ENCODE measurements at regions of chr3 and their contacts with region 1.

Region 1: GRCh38 chr3:57199895-57200297 is at the start of gene HESX1:
- DNase-seq: no peak
- H3K4me3 ChIP-seq: no peak within 1 kb of the TSS
- H3K27ac ChIP-seq: no peak within 1 kb of the TSS
- H3K4me1 ChIP-seq: peaks cover 9% of the 10 kb centered on the region
- H3K27me3 ChIP-seq: no peaks in the 10 kb centered on the region
- CTCF ChIP-seq: no peak
- POLR2A ChIP-seq: no peak
- total RNA-seq, gene HESX1: 0.58 and 0.65 TPM in 2 replicates

Region 2: GRCh38 chr3:56878074-56878473 is 321.8 kb before region 1 on chr3:
- CTCF ChIA-PET with region 1: no interaction called
- POLR2A ChIA-PET with region 1: no interaction called
- dilution Hi-C with region 1: no loop called
- intact Hi-C with region 1: no loop called
- DNase-seq: peak; percentile 53
- H3K4me3 ChIP-seq: no peak overlapping the region
- H3K27ac ChIP-seq: peak overlapping the region; percentile 13
- H3K4me1 ChIP-seq: peaks cover 30% of the 10 kb centered on the region
- H3K27me3 ChIP-seq: no peaks in the 10 kb centered on the region
- CTCF ChIP-seq: no peak
- POLR2A ChIP-seq: no peak

Region 3: DNA sequence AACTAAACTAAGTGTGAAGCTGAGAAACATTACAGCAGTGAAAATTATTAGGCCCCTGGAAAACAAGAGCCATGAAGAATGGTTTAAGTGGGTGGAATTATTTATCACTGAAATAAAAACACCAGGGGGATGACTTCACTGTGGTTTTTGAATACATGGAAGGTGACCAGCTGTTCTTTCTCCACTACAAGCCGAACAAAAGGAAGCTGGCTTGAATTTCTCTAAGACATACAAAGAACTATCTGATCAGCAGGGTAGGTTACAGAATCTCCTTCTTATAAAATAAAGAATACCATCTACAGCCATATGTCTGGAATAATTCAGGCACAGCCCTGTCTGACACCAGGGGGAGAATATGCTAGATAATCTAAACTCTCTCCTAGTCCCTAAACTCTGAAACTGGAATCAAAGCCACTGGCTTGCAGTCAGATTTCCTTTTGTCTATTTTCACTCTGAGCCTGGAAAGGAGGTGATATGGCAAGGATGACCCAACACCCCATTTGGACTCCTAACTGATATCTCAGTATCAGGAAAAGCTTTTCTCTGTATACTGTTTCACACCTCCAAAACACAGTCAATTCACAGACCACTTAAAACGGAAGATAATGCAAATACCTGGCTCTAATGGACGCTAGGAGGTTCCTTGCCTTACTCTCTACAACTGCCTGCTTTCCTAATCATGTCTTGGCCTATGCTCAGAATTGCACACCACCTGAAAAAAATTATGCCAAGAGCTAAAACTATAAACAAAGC is 108.2 kb before region 1 on chr3:
- CTCF ChIA-PET with region 1: no interaction called
- POLR2A ChIA-PET with region 1: no interaction called
- dilution Hi-C with region 1: no loop called
- intact Hi-C with region 1: no loop called
- DNase-seq: no peak
- H3K4me3 ChIP-seq: no peak overlapping the region
- H3K27ac ChIP-seq: no peak overlapping the region
- H3K4me1 ChIP-seq: no peaks in the 10 kb centered on the region
- H3K27me3 ChIP-seq: peaks cover 0 to 5% of the 10 kb centered on the region in 2 experiments
- CTCF ChIP-seq: no peak
- POLR2A ChIP-seq: no peak

Region 4: GRCh38 chr3:57221883-57222282 is 22.0 kb after region 1 on chr3:
- CTCF ChIA-PET with region 1: interaction called, 13 read pairs
- POLR2A ChIA-PET with region 1: no interaction called
- dilution Hi-C with region 1: no loop called
- intact Hi-C with region 1: loop called (anchors 2 kb)
- DNase-seq: peak; percentile 37
- H3K4me3 ChIP-seq: no peak overlapping the region
- H3K27ac ChIP-seq: no peak overlapping the region
- H3K4me1 ChIP-seq: peaks cover 4% of the 10 kb centered on the region
- H3K27me3 ChIP-seq: no peaks in the 10 kb centered on the region
- CTCF ChIP-seq: no peak
- POLR2A ChIP-seq: no peak

Region 5: GRCh38 chr3:57227204-57227929 is 27.5 kb after region 1 on chr3 and contains the start of gene APPL1:
- CTCF ChIA-PET with region 1: interaction called, 13 read pairs
- POLR2A ChIA-PET with region 1: no interaction called
- dilution Hi-C with region 1: no loop called
- intact Hi-C with region 1: loop called (anchors 2 kb)
- DNase-seq: peak; percentile 94
- H3K4me3 ChIP-seq: peak within 1 kb of the TSS; percentile 85 to 98 (median 88)
- H3K27ac ChIP-seq: peak within 1 kb of the TSS; percentile 75
- H3K4me1 ChIP-seq: peaks cover 18% of the 10 kb centered on the region
- H3K27me3 ChIP-seq: no peaks in the 10 kb centered on the region
- CTCF ChIP-seq: no peak
- POLR2A ChIP-seq: peak; percentile 84
- total RNA-seq, gene APPL1: 28.8 and 29.7 TPM in 2 replicates

Region 6: DNA sequence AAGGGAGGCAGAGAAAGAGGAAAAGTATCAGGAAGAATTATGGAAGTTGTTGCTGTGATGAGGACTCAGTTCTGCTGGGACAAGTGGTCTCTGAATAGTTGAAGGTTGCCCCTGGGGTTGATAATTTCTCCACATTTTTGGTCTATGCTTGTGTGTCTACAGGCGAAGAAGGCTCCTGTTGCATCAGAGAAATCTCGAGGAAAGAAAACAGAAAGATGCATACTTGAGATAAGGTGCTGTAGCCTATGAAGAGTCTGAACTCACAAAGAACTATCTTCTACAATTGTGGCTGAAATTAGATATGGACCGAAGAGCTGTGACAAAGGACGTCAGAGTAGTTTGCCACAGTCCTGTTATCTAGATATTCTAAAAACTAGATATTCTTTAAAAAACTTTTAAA is 115.8 kb after region 1 on chr3:
- CTCF ChIA-PET with region 1: no interaction called
- POLR2A ChIA-PET with region 1: no interaction called
- dilution Hi-C with region 1: no loop called
- intact Hi-C with region 1: no loop called
- DNase-seq: no peak
- H3K4me3 ChIP-seq: no peak overlapping the region
- H3K27ac ChIP-seq: no peak overlapping the region
- H3K4me1 ChIP-seq: no peaks in the 10 kb centered on the region
- H3K27me3 ChIP-seq: peaks cover 5 to 30% of the 10 kb centered on the region in 2 experiments
- CTCF ChIP-seq: no peak
- POLR2A ChIP-seq: no peak